ENCODE measurements at regions of chr10 and their contacts with region 1.

Region 1: GRCh38 chr10:90751107-90751997 is 106.5 kb downstream of the HTR7 start:
- DNase-seq: peak; percentile 71
- ATAC-seq: peak; percentile 49
- H3K4me3 Mint-ChIP-seq: no peak overlapping the region
- H3K27ac Mint-ChIP-seq: no peak overlapping the region
- H3K4me1 Mint-ChIP-seq: no peaks in the 10 kb centered on the region
- H3K27me3 Mint-ChIP-seq: peaks cover 24% of the 10 kb centered on the region
- CTCF ChIP-seq: peak; percentile 71

Region 2: DNA sequence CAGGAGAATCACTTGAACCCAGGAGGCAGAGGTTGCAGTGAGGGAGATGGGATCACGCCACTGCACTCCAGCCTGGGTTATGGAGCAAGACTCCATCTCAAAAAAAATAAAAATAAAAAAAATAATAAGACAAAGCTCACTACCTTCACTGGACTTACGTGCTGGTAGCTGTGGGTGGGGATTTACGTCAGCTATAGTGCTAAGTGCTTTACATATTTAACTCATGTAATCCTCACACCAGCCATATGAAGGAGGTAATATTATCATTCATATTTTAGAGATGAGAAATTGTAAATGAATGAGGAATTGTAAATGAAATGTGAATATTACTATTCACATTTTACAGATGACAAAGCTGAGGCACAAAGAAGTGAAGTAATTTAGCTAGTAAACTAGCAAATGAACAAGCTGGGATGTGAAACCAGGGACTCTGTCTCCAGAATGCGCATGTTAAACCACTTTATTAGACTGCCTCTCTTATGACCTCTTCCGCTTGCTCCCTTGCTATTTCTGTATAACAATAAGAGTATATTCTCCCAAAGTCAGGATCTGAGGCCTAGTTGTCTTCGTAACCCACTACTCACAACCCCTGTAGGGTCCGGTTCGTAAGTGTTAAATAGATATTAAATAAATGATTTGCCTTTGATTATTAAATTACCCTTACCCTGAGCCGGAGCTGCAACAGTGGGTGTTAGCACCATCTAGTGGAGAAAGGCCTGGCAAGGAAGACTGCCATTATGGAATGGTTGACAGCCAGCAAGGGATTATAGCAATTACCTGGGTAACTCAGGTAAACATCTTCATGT is 36.2 kb after region 1 on chr10:
- CTCF ChIA-PET with region 1: interaction called, 12 read pairs
- POLR2A ChIA-PET with region 1: interaction called, 3 read pairs
- intact Hi-C with region 1: no loop called
- DNase-seq: peak; percentile 35
- ATAC-seq: no peak
- H3K4me3 Mint-ChIP-seq: no peak overlapping the region
- H3K27ac Mint-ChIP-seq: no peak overlapping the region
- H3K4me1 Mint-ChIP-seq: no peaks in the 10 kb centered on the region
- H3K27me3 Mint-ChIP-seq: peaks cover 4% of the 10 kb centered on the region
- CTCF ChIP-seq: peak; percentile 68

Region 3: DNA sequence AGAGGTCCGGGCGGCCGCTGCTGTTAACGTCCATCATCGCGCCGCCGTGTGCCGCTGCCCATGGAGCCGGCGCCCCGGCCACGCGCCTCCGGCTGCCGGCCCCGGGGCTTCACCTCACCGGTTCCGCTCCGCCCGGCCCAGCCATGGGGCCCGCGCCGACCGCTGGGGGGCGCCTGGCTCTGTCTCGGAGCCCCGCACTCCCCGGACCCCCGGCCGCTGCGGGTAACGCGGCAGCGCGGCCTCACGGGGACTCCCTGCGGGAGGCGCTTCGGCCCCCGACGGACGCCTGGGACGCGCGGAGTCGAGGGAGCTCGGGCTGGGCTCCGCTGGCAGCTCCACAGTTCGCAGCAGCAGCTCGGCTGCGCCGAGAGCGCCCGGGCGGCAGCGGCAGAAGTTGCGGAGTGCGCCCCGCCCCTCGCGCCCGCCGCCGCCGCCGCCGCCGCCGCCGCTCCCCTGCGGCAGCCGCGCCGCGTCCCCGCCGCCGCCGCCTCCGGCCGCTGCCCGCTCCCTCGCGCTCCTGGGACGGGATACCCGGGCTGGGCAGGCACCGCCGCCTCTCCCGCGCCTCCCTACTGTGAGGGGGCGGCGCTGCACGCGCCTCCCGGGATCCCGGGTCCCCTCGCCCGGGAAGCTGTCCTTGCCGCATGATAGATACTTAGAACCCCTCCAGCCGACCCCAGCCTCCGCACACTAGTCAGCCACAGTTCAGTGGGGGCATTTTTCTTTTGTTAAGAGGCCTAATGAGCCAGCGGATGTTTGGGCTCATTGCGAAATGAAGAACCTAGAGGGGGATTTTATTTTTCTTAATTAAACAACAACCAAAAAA is 106.5 kb after region 1 on chr10 and contains the start of gene HTR7:
- CTCF ChIA-PET with region 1: interaction called, 56 read pairs
- POLR2A ChIA-PET with region 1: no interaction called
- intact Hi-C with region 1: loop called (anchors 5 kb)
- DNase-seq: peak; percentile 56
- ATAC-seq: peak; percentile 80
- H3K4me3 Mint-ChIP-seq: peak within 1 kb of the TSS; percentile 77
- H3K27ac Mint-ChIP-seq: no peak within 1 kb of the TSS
- H3K4me1 Mint-ChIP-seq: peaks cover 13% of the 10 kb centered on the region
- H3K27me3 Mint-ChIP-seq: peaks cover 58% of the 10 kb centered on the region
- CTCF ChIP-seq: peak; percentile 55
- total RNA-seq, gene HTR7: not detected

Region 4: GRCh38 chr10:90862908-90863514 is 111.7 kb after region 1 on chr10:
- CTCF ChIA-PET with region 1: interaction called, 56 read pairs
- POLR2A ChIA-PET with region 1: no interaction called
- intact Hi-C with region 1: loop called (anchors 5 kb)
- DNase-seq: no peak
- ATAC-seq: no peak
- H3K4me3 Mint-ChIP-seq: no peak overlapping the region
- H3K27ac Mint-ChIP-seq: no peak overlapping the region
- H3K4me1 Mint-ChIP-seq: peaks cover 9% of the 10 kb centered on the region
- H3K27me3 Mint-ChIP-seq: peaks cover 50% of the 10 kb centered on the region
- CTCF ChIP-seq: peak; percentile 73

Measured in activated CD8-positive, alpha-beta T cell treated with anti-CD3 and anti-CD28 coated beads for 36 hours (primary cell).